GM12878 (cell line): ENCODE measurements at regions of chr14 and their contacts with region 1.

Region 1: GRCh38 chr14:89303457-89304435 is 113.3 kb downstream of the FOXN3 start:
- DNase-seq: peak; percentile 76
- ATAC-seq: peak; percentile 82
- H3K4me3 ChIP-seq: peak overlapping the region; percentile 51
- H3K27ac ChIP-seq: peak overlapping the region; percentile 98
- H3K4me1 ChIP-seq: peaks cover 59% of the 10 kb centered on the region
- H3K27me3 ChIP-seq: no peaks in the 10 kb centered on the region
- CTCF ChIP-seq: no peak
- EP300 ChIP-seq: peak; percentile 59 to 63
- POLR2A ChIP-seq: peak; percentile 70
- RAD21 ChIP-seq: 0 out of 2 replicates have a peak, but pooled peaks have one; percentile 2

Region 2: DNA sequence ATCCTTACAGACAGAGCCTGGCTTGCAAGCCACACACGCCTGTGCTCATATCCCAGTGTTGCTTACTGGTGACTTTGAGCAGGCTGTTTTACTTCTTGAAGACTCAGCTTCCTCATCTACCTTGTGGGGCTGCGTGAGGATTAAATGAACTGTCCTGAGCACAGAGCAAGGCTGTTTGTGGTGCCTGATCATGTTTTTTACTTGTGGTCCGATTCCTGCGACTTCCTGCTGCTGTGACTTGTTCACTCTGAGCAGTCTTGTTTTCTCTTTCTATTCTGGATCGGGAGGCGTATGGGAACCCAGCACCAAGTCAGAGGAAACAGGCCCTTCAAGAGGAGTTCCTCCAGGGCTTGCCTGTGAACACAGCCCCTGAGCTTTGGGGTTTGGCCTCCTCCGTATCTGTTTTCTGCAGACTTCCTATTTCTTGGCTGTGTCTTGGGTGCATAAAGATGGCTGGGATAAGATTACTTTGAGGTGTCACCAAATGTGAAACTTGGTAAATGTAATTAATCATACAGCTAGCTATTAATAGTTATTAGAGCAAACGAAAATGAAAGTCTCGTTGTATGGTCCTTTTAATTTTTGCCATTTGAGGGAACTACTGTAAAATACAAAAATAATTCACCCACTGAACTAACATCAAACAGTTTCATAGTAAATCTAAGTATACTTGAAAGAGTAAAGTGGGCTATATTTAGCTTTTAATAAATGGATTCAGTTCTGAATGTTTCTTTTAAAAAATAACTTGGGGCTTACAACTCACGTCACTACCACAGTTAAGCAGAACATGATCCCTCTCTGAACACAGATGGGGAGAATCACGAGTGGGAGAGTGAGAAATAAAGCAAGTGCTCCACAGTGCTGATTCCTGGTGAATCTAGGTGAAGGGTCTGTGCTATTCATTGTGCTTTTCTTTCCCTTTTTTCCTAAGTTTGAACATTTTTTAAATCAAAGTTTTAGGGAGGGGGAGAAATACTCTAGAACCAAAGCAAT is 138.3 kb before region 1 on chr14:
- CTCF ChIA-PET with region 1: interaction called, 4 read pairs
- POLR2A ChIA-PET with region 1: no interaction called
- RAD21 ChIA-PET with region 1: no interaction called
- SMC1A ChIA-PET with region 1: interaction called, 10 read pairs
- in situ Hi-C with region 1: no loop called
- intact Hi-C with region 1: no loop called
- DNase-seq: peak; percentile 63
- ATAC-seq: peak; percentile 83
- H3K4me3 ChIP-seq: peak overlapping the region; percentile 62
- H3K27ac ChIP-seq: peak overlapping the region; percentile 97
- H3K4me1 ChIP-seq: peaks cover 19% of the 10 kb centered on the region
- H3K27me3 ChIP-seq: no peaks in the 10 kb centered on the region
- CTCF ChIP-seq: no peak
- EP300 ChIP-seq: no peak
- POLR2A ChIP-seq: 0 out of 2 replicates have a peak, but pooled peaks have one; percentile 55
- RAD21 ChIP-seq: no peak

Region 3: GRCh38 chr14:89283315-89284060 is 20.3 kb before region 1 on chr14:
- CTCF ChIA-PET with region 1: interaction called, 9 read pairs
- POLR2A ChIA-PET with region 1: interaction called, 33 read pairs
- RAD21 ChIA-PET with region 1: interaction called, 17 read pairs
- SMC1A ChIA-PET with region 1: interaction called, 35 read pairs
- in situ Hi-C with region 1: no loop called
- intact Hi-C with region 1: no loop called
- DNase-seq: no peak
- ATAC-seq: peak; percentile 97
- H3K4me3 ChIP-seq: no peak overlapping the region
- H3K27ac ChIP-seq: no peak overlapping the region
- H3K4me1 ChIP-seq: peaks cover 8% of the 10 kb centered on the region
- H3K27me3 ChIP-seq: no peaks in the 10 kb centered on the region
- CTCF ChIP-seq: no peak
- EP300 ChIP-seq: 0 out of 4 replicates have a peak, but pooled peaks of 1 of the 2 experiments have one; percentile 19
- POLR2A ChIP-seq: no peak
- RAD21 ChIP-seq: no peak

Region 4: DNA sequence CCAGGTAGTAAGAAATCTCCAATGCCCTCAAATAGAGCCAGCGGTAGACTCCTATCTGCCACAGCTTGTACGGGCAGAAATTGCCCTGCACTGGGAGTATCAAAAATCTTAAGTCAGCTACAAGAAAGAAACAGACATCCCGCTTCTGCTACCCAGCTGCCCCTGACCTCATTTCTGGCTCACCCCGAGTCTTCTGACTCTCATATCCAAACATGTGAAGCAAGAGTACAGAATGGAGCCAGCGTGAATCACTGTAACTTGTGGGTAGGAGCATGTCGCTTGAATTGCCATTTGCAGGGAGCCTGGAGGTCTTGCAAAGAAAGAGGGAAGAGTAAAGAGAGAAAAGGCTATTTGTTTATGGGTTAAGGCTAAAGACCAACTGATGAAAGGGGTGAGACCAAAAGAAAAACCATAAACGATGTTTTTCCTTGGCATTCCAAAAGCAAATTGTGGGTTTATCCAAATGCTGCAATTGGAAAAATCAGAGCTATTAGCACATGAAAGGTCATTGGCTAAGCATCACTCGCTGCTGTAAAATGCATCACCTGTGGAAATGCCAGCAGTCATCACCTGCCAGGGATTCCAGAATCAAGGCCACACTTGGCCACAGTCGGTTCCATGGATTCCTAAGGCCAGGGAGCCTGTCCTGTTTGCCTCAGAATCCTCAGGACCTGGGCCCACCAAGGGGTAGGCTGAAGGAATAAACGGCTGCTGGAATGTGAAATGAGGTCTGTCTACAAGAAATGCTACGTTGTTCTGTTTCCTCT is 26.7 kb after region 1 on chr14:
- CTCF ChIA-PET with region 1: interaction called, 5 read pairs
- POLR2A ChIA-PET with region 1: interaction called, 4 read pairs
- RAD21 ChIA-PET with region 1: interaction called, 20 read pairs
- SMC1A ChIA-PET with region 1: interaction called, 22 read pairs
- in situ Hi-C with region 1: no loop called
- intact Hi-C with region 1: loop called (anchors 2 kb)
- DNase-seq: no peak
- ATAC-seq: peak; percentile 1; the same call in 1 of the 3 replicates
- H3K4me3 ChIP-seq: no peak overlapping the region; the same call in 1 of the 2 replicates
- H3K27ac ChIP-seq: peak overlapping the region; percentile 91
- H3K4me1 ChIP-seq: peaks cover 50% of the 10 kb centered on the region
- H3K27me3 ChIP-seq: no peaks in the 10 kb centered on the region
- CTCF ChIP-seq: no peak
- EP300 ChIP-seq: no peak
- POLR2A ChIP-seq: no peak
- RAD21 ChIP-seq: no peak

Region 5: DNA sequence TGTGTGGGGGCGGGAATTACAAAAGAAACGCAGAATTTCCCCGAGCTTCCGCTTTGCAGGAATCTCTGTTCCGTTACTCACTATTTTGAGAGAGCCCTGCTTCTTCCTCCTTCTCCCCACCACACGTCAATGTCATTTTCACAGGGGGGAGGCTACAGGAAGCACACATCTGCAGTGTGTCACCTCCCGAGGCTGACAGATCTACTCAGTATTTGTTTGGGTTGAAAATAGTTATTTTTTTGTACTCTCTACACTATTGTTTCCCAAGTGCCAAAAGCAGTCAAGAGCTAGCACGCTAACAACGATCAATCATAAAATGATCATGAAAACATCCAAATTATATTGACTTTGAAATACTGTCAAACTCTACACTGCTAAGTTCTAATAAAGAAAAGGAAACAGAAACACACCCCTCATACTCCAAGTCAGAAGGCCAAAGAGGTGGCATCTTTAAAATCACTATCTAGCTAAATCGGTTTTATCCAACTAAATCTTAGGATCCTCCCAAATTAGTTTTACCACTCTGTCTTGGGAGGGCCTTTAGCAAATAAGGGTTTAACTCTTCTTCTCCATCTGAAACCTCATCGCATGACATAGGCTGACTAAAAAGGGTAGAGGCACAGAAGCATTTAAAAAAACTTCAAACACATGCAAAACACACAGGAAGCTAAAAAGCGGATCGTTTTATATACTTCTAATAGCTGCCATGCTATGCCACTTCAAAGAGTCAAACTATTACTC is 61.5 kb after region 1 on chr14:
- CTCF ChIA-PET with region 1: interaction called, 5 read pairs
- POLR2A ChIA-PET with region 1: interaction called, 13 read pairs
- RAD21 ChIA-PET with region 1: interaction called, 19 read pairs
- SMC1A ChIA-PET with region 1: interaction called, 56 read pairs
- in situ Hi-C with region 1: no loop called
- intact Hi-C with region 1: no loop called
- DNase-seq: peak; percentile 81
- ATAC-seq: peak; percentile 96
- H3K4me3 ChIP-seq: peak overlapping the region; percentile 59
- H3K27ac ChIP-seq: peak overlapping the region; percentile 97
- H3K4me1 ChIP-seq: peaks cover 31% of the 10 kb centered on the region
- H3K27me3 ChIP-seq: no peaks in the 10 kb centered on the region
- CTCF ChIP-seq: no peak
- EP300 ChIP-seq: peak; percentile 82 to 90
- POLR2A ChIP-seq: peak; percentile 51; the same call in 1 of the 2 replicates
- RAD21 ChIP-seq: no peak; the same call in 1 of the 2 replicates

Region 6: DNA sequence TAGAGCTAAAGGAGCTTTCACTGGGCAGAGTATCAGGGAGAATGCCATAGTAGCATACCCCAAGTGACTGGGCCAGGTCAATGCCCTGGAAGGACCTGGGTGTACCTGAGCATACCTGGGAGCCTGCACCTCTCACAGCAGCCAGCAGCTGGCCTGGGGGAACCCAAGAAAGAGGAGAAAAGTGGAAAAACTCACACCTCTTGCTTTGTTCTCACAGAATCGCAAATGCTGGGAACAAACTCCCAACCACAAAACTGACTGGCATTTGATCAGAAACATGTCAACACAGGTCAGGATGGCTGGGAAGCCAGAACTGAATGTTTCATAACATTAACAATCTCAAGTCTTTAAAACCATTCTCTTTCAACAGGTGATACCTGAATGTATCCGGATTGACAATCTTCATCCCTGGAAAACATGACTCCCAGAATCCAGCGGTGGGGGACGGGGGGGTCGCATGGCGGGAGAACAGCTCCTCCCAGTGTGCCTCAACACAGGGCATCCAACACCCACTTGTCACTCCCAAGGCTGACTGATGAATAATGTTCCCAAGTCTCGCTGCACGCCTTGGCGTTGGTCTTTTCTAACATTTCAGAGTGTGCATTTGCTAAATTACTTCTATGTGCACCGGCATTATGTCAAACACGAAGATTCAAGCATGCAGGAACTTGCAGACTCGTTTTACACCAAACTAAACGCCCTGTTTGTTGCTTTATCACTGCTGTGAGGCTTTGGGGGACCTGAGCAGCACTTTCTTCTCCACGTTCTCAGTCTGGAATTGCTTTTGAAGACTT is 105.4 kb after region 1 on chr14:
- CTCF ChIA-PET with region 1: interaction called, 4 read pairs
- POLR2A ChIA-PET with region 1: interaction called, 11 read pairs
- RAD21 ChIA-PET with region 1: no interaction called
- SMC1A ChIA-PET with region 1: interaction called, 6 read pairs
- in situ Hi-C with region 1: no loop called
- intact Hi-C with region 1: loop called (anchors 2 kb)
- DNase-seq: no peak
- ATAC-seq: peak; percentile 38; the same call in 2 of the 3 replicates
- H3K4me3 ChIP-seq: peak overlapping the region; percentile 57
- H3K27ac ChIP-seq: peak overlapping the region; percentile 49
- H3K4me1 ChIP-seq: peaks cover 28% of the 10 kb centered on the region
- H3K27me3 ChIP-seq: no peaks in the 10 kb centered on the region
- CTCF ChIP-seq: no peak
- EP300 ChIP-seq: no peak
- POLR2A ChIP-seq: no peak
- RAD21 ChIP-seq: no peak

Region 7: GRCh38 chr14:89767861-89768268 is 464.1 kb after region 1 on chr14:
- CTCF ChIA-PET with region 1: interaction called, 3 read pairs
- POLR2A ChIA-PET with region 1: no interaction called
- RAD21 ChIA-PET with region 1: interaction called, 3 read pairs
- SMC1A ChIA-PET with region 1: no interaction called
- in situ Hi-C with region 1: no loop called
- intact Hi-C with region 1: loop called (anchors 5 kb)
- DNase-seq: peak; percentile 65
- ATAC-seq: peak; percentile 94
- H3K4me3 ChIP-seq: no peak overlapping the region
- H3K27ac ChIP-seq: peak overlapping the region; percentile 56
- H3K4me1 ChIP-seq: peaks cover 22% of the 10 kb centered on the region
- H3K27me3 ChIP-seq: no peaks in the 10 kb centered on the region
- CTCF ChIP-seq: peak; percentile 75 to 87 (median 81)
- EP300 ChIP-seq: 0 out of 4 replicates have a peak, but pooled peaks of 1 of the 2 experiments have one; percentile 29
- POLR2A ChIP-seq: no peak
- RAD21 ChIP-seq: peak; percentile 95